ENCODE measurements at regions of chr6 and their contacts with region 1.

Region 1: DNA sequence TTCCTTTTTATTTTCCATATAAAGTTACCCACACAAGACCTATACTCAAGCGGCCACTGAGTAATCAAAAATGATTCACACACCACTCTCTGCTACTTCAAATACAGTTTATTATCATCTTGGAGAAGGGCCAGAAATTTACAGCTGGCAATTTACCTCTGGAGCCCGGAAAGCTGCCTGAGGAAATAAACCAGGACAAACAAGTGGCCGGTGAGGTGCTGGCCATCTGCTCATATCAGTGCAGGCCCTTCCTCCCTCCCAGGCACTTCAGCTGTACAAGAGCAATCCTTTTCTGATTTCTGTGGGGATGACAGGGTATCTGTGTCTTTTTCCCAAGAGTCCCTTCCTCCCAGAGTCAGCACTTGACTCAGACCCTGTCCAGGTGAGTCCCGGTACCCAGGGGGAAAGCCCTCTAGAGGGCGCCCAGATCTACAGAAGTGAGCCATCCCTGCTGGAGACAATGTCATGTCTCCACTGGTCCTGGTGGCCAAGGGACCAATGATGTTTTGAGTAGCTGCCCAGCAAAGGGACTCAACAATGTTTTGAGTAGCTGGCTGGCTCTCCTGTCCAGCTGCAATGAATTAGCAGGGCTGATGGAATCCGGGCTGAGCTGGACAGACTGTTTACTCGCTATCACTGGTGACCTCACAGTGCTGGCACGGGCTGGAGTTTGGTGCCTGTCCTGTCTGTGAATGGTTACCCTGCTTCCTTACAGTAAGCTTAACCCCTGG is 23.6 kb downstream of the LRP11 start:
- H3K4me3 ChIP-seq: no peak overlapping the region
- H3K27ac ChIP-seq: no peak overlapping the region
- H3K4me1 ChIP-seq: no peaks in the 10 kb centered on the region
- CTCF ChIP-seq: peak; percentile 61

Region 2: GRCh38 chr6:149586149-149586548 is 254.4 kb before region 1 on chr6:
- CTCF ChIA-PET with region 1: no interaction called
- POLR2A ChIA-PET with region 1: no interaction called
- H3K4me3 ChIP-seq: no peak overlapping the region
- H3K27ac ChIP-seq: no peak overlapping the region
- H3K4me1 ChIP-seq: no peaks in the 10 kb centered on the region
- CTCF ChIP-seq: no peak

Region 3: GRCh38 chr6:149823013-149823412 is 17.5 kb before region 1 on chr6:
- CTCF ChIA-PET with region 1: interaction called, 41 read pairs
- POLR2A ChIA-PET with region 1: no interaction called
- H3K4me3 ChIP-seq: no peak overlapping the region
- H3K27ac ChIP-seq: no peak overlapping the region
- H3K4me1 ChIP-seq: no peaks in the 10 kb centered on the region
- CTCF ChIP-seq: no peak

Region 4: DNA sequence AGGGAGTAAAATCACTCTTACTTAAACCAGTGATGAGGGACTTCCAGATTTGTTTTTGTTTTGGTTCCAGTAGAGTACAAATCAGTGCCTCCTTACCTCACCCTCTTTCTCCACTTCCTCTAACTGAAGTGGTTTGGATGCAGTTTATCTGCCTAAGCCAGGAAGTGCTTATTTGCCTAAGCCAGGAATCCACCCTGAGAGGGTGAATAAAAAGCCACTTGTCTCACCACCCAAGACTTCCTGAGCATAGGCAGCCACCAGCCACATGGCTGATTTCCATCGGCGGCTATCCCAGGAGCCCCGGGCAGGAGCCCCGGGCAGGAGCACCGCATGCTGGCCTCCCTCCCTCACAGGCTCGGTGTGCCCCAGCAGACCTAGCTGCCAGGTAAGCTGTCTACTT is 11.7 kb after region 1 on chr6:
- CTCF ChIA-PET with region 1: interaction called, 49 read pairs
- POLR2A ChIA-PET with region 1: interaction called, 5 read pairs
- H3K4me3 ChIP-seq: no peak overlapping the region
- H3K27ac ChIP-seq: no peak overlapping the region; the same call in 1 of the 2 replicates
- H3K4me1 ChIP-seq: peaks cover 41% of the 10 kb centered on the region
- CTCF ChIP-seq: no peak

Region 5: GRCh38 chr6:149863697-149864577 is 23.4 kb after region 1 on chr6 and contains the start of gene LRP11:
- CTCF ChIA-PET with region 1: interaction called, 56 read pairs
- POLR2A ChIA-PET with region 1: interaction called, 17 read pairs
- H3K4me3 ChIP-seq: peak within 1 kb of the TSS; percentile 81
- H3K27ac ChIP-seq: peak within 1 kb of the TSS; percentile 93
- H3K4me1 ChIP-seq: peaks cover 29% of the 10 kb centered on the region
- CTCF ChIP-seq: no peak

Region 6: GRCh38 chr6:149925974-149926777 is 85.7 kb after region 1 on chr6:
- CTCF ChIA-PET with region 1: interaction called, 45 read pairs
- POLR2A ChIA-PET with region 1: no interaction called
- H3K4me3 ChIP-seq: peak overlapping the region; percentile 38
- H3K27ac ChIP-seq: no peak overlapping the region
- H3K4me1 ChIP-seq: no peaks in the 10 kb centered on the region
- CTCF ChIP-seq: peak; percentile 86

Region 7: DNA sequence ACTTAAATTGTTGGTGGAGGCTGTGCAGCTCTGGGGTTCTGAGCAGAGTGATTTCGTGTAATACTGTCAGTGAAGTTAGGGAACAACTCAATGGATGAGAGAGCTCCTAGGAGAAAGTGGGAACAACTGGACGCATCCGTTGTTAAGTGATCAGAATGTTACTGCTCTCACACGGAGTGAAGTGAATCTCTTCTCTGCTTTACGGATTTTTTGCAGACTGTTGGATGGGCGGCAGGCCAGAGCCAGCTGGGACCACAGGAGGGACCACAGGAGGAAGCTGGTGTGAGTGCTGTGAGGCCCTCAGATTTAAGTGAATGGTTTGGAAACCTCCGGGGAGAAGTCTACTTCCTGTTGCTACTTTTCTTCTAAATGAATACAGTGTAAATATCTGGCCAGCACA is 278.7 kb after region 1 on chr6:
- CTCF ChIA-PET with region 1: no interaction called
- POLR2A ChIA-PET with region 1: no interaction called
- H3K4me3 ChIP-seq: no peak overlapping the region
- H3K27ac ChIP-seq: no peak overlapping the region
- H3K4me1 ChIP-seq: no peaks in the 10 kb centered on the region
- CTCF ChIP-seq: no peak

Measured in HEK293 (cell line).